AG04449 (cell line): ENCODE measurements at regions of chr15 and their contacts with region 1.

Region 1: GRCh38 chr15:74407055-74407691 is 26.6 kb downstream of the SEMA7A start:
- DNase-seq: peak; percentile 73
- H3K4me3 ChIP-seq: peak overlapping the region; percentile 33
- CTCF ChIP-seq: peak; percentile 18

Region 2: DNA sequence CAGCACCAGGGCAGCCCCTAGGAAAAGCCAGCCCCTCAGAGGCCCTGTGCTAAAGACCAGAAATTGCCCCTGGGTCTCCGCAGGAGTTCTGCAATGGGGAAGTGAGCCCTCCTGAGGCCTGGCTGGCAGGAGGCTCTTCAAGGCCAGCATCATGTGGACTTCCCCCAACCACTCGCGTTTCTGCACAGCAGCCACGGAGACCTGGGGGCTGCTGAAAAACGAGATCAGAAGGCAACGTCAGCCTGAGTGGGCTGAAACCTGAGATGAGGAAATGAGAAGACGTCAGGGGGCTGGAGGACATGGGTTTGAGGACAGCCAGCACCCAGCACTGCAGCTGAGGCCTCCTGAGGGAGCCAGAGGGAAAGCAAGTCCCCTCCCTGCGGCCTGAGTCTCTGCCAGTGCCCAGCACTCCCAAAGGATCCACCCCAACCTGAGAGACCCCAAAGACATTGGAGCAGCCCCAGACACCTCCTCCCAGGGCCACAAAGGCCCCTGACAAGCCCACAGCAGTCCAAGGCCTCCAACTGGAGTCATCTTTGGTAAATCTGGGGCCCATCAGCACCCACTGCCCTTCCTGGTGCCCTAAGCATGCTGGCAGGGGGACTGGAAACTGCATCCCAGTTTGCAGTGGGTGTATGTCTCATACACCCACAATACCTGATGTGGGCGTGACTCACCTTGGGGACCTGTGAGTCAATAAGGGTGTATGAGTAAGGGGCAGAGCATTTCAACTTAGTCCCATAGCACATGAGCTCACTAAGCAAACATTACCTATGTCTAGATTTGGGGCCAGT is 10.5 kb before region 1 on chr15:
- CTCF ChIA-PET with region 1: interaction called, 10 read pairs
- POLR2A ChIA-PET with region 1: interaction called, 12 read pairs
- DNase-seq: no peak
- H3K4me3 ChIP-seq: no peak overlapping the region
- CTCF ChIP-seq: peak; percentile 15

Region 3: GRCh38 chr15:74420197-74420898 is 13.2 kb after region 1 on chr15:
- CTCF ChIA-PET with region 1: interaction called, 12 read pairs
- POLR2A ChIA-PET with region 1: interaction called, 5 read pairs
- DNase-seq: no peak
- H3K4me3 ChIP-seq: no peak overlapping the region
- CTCF ChIP-seq: no peak

Region 4: DNA sequence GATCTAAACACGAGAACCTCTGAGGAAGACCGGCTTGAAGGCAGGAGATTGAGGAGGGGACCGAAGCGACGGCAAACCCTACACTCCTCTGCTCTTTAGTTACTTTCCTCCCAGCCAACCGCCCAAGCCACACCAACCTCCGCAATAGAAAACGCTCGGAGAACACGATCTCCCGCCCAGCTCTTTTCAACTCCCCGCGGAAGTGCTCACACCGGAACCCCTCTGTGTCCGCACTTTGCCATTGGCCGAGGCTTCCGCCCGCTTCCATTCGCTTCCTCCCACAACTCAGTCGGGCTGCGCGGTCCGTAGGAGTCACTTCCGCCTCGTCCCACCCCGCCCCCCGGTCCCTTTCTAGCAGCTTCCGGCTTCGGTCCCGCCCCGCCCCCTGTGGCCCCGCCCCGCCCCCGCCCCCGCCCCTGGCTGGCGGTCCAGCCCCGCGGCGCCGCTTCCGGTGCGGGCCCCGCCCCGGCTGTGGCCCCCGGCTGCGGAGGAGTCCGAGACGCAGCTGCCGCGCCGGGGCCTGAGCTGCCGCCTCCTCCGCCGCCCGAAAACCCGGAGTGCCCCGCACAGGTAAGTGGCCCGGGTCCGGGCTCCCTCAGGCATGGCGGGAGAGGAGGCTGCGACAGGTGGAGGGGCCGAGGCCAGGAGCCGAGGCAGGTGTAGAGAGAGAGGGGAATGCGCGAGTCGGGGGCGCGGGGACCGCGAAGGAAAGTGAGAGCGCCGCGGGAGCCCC is 133.8 kb after region 1 on chr15 and contains the start of gene ARID3B:
- CTCF ChIA-PET with region 1: no interaction called
- POLR2A ChIA-PET with region 1: no interaction called
- DNase-seq: peak; percentile 80
- H3K4me3 ChIP-seq: peak within 1 kb of the TSS; percentile 86
- CTCF ChIP-seq: no peak